HepG2 (cell line): ENCODE measurements at regions of chr20 and their contacts with region 1.

Region 1: DNA sequence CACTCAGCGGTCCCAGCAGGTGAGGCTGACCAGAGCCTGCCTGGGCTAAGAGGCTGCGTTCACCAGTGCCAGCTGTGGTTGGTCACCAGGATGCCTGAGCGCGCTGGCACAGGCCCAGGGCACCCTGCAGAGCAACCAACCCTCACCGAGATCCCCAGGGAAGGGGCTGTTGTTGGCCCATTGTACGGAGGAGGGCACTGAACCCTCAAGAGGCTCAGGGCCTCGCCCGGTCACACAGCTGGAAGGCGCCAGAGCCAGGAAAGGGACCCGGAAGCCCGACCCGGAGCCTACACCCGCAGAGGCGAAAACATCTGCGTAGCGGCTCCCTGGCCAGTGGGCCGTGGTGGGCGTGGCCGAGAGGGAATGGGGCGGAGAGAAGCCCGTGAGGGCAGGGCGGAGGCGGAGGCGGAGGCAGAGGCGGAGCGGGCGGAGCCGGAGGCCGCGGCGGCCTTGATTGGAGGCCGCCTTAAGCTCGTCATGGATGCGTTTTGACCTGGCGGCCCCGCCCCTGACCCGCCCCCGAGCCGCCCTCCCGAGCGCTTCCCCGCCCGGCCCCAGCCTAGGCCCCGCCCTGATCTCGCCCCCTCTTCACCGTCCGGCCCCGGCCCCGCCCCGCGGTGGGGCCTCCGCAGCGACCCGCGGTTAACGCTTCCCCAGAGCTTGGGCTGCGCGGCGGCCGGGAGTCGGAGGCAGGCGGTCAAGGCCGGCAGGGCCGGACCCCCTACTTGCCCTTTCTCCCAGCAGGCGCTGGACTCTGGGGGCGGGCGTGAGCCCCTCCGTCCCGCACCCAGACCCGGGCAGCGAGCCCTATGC is 2.2 kb upstream of the MRGBP start:
- DNase-seq: peak; percentile 94
- ATAC-seq: peak; percentile 73
- H3K4me3 ChIP-seq: peak overlapping the region; percentile 66 to 82 (median 79)
- H3K27ac ChIP-seq: peak overlapping the region; percentile 89
- H3K4me1 ChIP-seq: peaks cover 47% of the 10 kb centered on the region
- H3K27me3 ChIP-seq: peaks cover 6 to 30% of the 10 kb centered on the region in 2 experiments; a peak in 4 of 5 replicates
- CTCF ChIP-seq: peak; percentile 44
- EP300 ChIP-seq: no peak
- POLR2A ChIP-seq: peak in 1 of 2 experiments; percentile 79; a peak in 2 of 4 replicates
- RAD21 ChIP-seq: peak; percentile 69

Region 2: DNA sequence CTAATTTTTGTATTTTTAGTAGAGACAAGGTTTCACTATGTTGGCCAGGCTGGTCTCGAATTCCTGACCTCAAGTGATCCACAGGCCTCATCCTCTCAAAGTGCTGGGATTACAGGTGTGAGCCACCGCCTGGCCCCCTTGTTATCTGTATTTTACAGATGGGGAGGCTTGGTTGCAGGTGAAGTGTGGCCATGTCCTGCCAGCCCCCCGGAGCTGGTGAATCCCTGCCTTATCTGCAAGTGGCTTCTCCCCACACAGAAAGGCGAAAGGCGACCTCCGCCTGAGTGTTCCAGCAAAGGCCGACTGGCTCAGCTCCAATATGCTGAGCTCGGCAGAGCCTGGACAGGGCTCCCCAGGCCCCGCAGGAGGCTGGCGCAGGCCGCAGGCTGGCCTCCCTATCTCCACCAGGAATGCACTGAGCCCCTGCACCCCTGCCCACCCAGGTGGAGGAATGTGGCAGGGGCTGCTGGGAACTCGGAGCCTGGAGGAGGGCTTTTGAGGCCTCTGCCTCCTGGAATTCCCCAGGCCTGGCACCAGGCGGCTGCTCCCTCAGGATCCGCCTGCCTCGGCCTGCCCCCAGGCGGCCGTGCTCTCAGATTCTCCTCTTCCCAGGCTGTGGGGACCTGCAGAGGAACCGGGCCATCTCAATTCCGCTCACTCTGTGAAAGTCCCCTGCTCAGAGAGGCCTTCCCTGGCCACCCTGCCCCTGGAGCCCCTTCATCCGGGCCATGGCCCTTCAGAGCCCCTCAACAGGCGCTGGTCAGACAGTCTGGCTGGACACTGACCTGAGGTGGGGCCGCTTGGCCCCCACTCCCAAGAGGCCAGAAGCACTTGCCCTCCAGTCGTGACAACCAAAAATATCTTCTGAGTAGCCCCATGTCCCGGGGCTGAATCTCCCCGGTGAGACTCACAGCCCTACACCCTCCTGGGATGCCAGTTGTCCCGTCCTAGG is 417.7 kb before region 1 on chr20:
- CTCF ChIA-PET with region 1: no interaction called
- POLR2A ChIA-PET with region 1: no interaction called
- in situ Hi-C with region 1: no loop called
- intact Hi-C with region 1: loop called (anchors 10 kb)
- DNase-seq: peak; percentile 92
- ATAC-seq: peak; percentile 84
- H3K4me3 ChIP-seq: peak overlapping the region; percentile 47 to 71 (median 62)
- H3K27ac ChIP-seq: peak overlapping the region; percentile 63
- H3K4me1 ChIP-seq: peaks cover 60% of the 10 kb centered on the region
- H3K27me3 ChIP-seq: no peaks in the 10 kb centered on the region
- CTCF ChIP-seq: peak; percentile 97
- EP300 ChIP-seq: no peak
- POLR2A ChIP-seq: peak in 1 of 2 experiments; percentile 86; a peak in 2 of 4 replicates
- RAD21 ChIP-seq: peak; percentile 99

Region 3: DNA sequence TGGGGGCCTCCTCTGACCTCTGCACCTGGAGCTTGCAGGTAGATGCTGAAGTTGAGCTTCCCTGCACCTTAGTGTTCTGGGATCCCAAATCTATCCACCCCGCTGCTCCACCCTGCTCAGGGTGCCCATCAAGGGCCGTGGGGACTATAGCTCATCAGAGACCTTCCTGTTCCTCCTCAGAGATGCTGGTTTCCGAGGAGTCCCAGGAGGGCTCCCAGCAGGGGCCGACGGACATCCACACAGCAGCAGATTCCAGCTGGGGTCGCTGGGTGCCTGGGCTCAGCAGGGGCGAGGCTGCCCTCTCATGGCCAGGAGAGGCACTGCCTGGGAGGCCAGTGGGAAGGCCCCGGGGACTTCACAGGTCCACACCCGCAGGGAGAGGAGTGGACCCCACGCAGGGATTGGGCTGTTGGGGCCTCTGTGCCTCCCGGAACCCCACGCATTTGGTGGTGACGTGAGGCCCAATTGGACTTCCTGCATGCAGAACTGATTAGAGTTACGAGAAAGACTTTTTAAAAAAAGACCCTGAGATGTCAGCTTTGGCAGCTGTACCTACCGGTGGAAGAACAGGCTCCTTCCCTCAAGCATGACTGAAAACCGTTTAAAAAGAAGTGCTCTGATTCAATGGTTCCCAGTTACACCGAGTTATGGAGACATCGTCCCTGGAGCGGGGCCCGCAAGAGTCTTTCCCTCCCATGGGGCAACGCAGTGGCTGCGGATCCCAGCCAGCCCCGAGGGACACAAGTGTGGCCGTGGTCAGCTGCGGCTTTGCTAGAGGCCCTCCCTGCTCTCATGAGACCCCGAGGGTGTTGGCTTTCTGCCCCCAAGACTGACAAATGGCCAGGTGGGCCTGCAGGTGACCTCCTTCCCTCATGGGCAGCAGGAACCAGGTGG is 177.1 kb before region 1 on chr20:
- CTCF ChIA-PET with region 1: interaction called, 10 read pairs
- POLR2A ChIA-PET with region 1: interaction called, 3 read pairs
- in situ Hi-C with region 1: loop called (anchors 5 kb)
- intact Hi-C with region 1: loop called (anchors 2 kb)
- DNase-seq: peak; percentile 71
- ATAC-seq: peak; percentile 97
- H3K4me3 ChIP-seq: peak overlapping the region in 1 of 3 experiments; percentile 57; a peak in 1 of 6 replicates
- H3K27ac ChIP-seq: no peak overlapping the region
- H3K4me1 ChIP-seq: peaks cover 38% of the 10 kb centered on the region
- H3K27me3 ChIP-seq: peaks cover 5 to 52% of the 10 kb centered on the region in 2 experiments; a peak in 4 of 5 replicates
- CTCF ChIP-seq: peak; percentile 100
- EP300 ChIP-seq: no peak; a peak in 1 of 4 replicates
- POLR2A ChIP-seq: no peak
- RAD21 ChIP-seq: peak; percentile 99

Region 4: GRCh38 chr20:62631336-62632308 is 162.5 kb before region 1 on chr20:
- CTCF ChIA-PET with region 1: no interaction called
- POLR2A ChIA-PET with region 1: no interaction called
- in situ Hi-C with region 1: no loop called
- intact Hi-C with region 1: no loop called
- DNase-seq: no peak
- ATAC-seq: no peak
- H3K4me3 ChIP-seq: no peak overlapping the region
- H3K27ac ChIP-seq: no peak overlapping the region
- H3K4me1 ChIP-seq: peaks cover 63% of the 10 kb centered on the region
- H3K27me3 ChIP-seq: peaks cover 28 to 79% of the 10 kb centered on the region in 2 experiments
- CTCF ChIP-seq: no peak
- EP300 ChIP-seq: no peak
- POLR2A ChIP-seq: no peak
- RAD21 ChIP-seq: no peak

Region 5: DNA sequence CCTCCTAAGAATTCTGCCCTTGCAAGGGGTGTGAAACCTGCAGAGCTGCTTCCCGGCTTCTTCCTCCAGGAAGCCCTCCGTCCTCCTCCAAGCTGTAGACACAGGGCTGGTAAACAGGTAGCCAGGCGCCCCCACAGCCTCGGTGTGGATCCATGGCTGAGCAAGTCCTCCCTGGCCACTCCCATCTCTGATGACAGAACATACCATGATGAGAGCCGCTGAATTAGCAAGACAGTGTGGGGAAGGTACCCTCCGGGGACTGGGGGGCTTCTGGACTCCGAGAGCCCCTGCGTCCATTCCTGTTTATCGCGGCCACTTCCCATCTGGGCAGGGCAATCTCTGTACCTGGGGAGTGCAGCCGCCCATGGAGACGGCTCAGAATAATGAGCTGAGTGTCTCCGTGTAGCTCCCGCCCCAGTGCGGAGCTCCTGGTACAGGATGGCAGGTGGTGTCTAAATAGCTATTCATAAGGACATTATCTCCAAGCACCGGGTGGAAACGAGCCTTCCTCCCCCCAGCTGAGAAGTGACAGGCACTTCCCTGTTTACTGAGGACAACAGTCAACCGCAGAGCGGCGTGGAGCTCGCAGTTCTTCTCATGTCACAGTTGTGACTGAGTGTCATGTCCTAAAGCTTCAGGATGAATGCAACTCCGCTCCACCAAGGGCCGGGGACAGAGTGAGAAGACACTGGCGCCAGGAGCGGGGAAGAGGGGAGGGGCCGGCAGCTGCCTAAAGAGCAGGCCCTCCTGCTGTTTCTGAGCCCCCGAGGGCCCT is 108.2 kb before region 1 on chr20:
- CTCF ChIA-PET with region 1: interaction called, 6 read pairs
- POLR2A ChIA-PET with region 1: no interaction called
- in situ Hi-C with region 1: no loop called
- intact Hi-C with region 1: loop called (anchors 5 kb)
- DNase-seq: peak; percentile 24
- ATAC-seq: peak; percentile 17
- H3K4me3 ChIP-seq: no peak overlapping the region; a peak in 1 of 6 replicates
- H3K27ac ChIP-seq: no peak overlapping the region
- H3K4me1 ChIP-seq: peaks cover 8% of the 10 kb centered on the region; the same call in 1 of the 2 replicates
- H3K27me3 ChIP-seq: peaks cover 27 to 84% of the 10 kb centered on the region in 2 experiments
- CTCF ChIP-seq: no peak
- EP300 ChIP-seq: no peak
- POLR2A ChIP-seq: no peak
- RAD21 ChIP-seq: no peak

Region 6: GRCh38 chr20:62808211-62808865 is 14.2 kb after region 1 on chr20:
- CTCF ChIA-PET with region 1: interaction called, 25 read pairs
- POLR2A ChIA-PET with region 1: interaction called, 110 read pairs
- in situ Hi-C with region 1: no loop called
- intact Hi-C with region 1: loop called (anchors 1 kb)
- DNase-seq: peak; percentile 66
- ATAC-seq: peak; percentile 18
- H3K4me3 ChIP-seq: no peak overlapping the region
- H3K27ac ChIP-seq: no peak overlapping the region
- H3K4me1 ChIP-seq: peaks cover 38% of the 10 kb centered on the region
- H3K27me3 ChIP-seq: no peaks in the 10 kb centered on the region
- CTCF ChIP-seq: peak; percentile 95
- EP300 ChIP-seq: no peak
- POLR2A ChIP-seq: no peak; a peak in 3 of 4 replicates
- RAD21 ChIP-seq: peak; percentile 91

Region 7: DNA sequence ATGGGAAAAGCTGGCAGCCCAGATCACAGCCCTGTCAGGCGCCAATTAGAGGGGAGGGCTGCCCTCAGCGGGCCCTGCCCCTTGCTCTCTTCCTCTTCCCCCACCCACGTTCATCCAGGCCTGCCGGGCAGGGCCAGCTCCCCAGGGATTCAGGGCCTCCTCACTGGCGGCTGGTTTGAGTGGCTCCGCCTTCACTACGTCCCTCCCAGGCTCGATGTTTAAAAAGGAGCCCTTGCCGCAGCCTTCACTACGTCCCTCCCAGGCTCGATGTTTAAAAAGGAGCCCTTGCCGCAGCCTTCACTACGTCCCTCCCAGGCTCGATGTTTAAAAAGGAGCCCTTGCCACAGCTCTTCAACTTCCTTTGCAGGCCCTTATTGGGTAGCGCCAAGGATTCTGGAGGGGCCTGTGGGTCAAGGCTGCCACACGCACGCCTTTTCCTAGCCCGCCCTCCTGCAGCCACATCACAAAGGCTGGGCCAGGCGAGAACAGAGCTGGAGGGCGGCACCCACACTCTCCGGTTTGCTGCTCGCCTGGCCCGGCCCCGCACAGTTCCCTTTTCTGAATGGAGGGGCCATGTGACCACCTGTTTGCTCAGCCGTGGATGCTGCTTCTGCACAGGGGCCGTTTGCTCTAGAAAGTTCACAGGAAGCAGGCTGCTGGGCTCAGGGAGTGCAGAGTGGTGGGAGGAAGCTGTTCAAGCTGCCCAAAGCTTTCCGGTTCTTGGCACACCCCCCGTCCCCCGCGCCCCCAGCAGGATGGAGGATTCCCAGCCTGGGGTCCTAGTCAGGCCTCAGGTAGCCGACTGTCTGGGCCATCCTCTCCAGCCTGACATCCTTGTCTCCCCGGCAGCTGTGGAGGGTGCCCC is 160.0 kb after region 1 on chr20:
- CTCF ChIA-PET with region 1: no interaction called
- POLR2A ChIA-PET with region 1: interaction called, 11 read pairs
- in situ Hi-C with region 1: no loop called
- intact Hi-C with region 1: no loop called
- DNase-seq: peak; percentile 95
- ATAC-seq: peak; percentile 69
- H3K4me3 ChIP-seq: peak overlapping the region; percentile 74 to 95 (median 78)
- H3K27ac ChIP-seq: peak overlapping the region; percentile 93
- H3K4me1 ChIP-seq: peaks cover 76% of the 10 kb centered on the region
- H3K27me3 ChIP-seq: no peaks in the 10 kb centered on the region; a peak in 1 of 5 replicates
- CTCF ChIP-seq: peak; percentile 41; the same call in 1 of the 2 replicates
- EP300 ChIP-seq: peak in 1 of 2 experiments; percentile 67; a peak in 2 of 4 replicates
- POLR2A ChIP-seq: peak in 1 of 2 experiments; percentile 55; a peak in 2 of 4 replicates
- RAD21 ChIP-seq: peak; percentile 23; the same call in 1 of the 2 replicates